Tibial artery (tissue), 4 donors: ENCODE measurements at regions of chr9 and their contacts with region 1.

Region 1: DNA sequence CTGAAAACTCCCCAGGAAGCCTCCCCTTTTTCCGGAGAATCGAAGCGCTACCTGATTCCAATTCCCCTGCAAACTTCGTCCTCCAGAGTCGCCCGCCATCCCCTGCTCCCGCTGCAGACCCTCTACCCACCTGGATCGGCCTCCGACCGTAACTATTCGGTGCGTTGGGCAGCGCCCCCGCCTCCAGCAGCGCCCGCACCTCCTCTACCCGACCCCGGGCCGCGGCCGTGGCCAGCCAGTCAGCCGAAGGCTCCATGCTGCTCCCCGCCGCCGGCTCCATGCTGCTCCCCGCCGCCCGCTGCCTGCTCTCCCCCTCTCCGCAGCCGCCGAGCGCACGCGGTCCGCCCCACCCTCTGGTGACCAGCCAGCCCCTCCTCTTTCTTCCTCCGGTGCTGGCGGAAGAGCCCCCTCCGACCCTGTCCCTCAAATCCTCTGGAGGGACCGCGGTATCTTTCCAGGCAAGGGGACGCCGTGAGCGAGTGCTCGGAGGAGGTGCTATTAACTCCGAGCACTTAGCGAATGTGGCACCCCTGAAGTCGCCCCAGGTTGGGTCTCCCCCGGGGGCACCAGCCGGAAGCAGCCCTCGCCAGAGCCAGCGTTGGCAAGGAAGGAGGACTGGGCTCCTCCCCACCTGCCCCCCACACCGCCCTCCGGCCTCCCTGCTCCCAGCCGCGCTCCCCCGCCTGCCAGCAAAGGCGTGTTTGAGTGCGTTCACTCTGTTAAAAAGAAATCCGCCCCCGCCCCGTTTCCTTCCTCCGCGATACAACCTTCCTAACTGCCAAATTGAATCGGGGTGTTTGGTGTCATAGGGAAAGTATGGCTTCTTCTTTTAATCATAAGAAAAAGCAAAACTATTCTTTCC is 19.4 kb downstream of the CDKN2A start:
- DNase-seq: no peak
- H3K4me3 ChIP-seq: peak overlapping the region; percentile 35 to 49
- H3K27ac ChIP-seq: no peak overlapping the region
- H3K4me1 ChIP-seq: peaks cover 0 to 18% (median 13%) of the 10 kb centered on the region in 4 donors
- H3K27me3 ChIP-seq: peaks cover 4 to 98% of the 10 kb centered on the region in 2 donors
- CTCF ChIP-seq: no peak

Region 2: GRCh38 chr9:22097697-22098096 is 122.9 kb after region 1 on chr9:
- intact Hi-C with region 1: loop called (anchors 5 kb)
- DNase-seq: no peak
- H3K4me3 ChIP-seq: no peak overlapping the region
- H3K27ac ChIP-seq: no peak overlapping the region
- H3K4me1 ChIP-seq: peaks cover 0 to 1% (median 0%) of the 10 kb centered on the region in 4 donors
- H3K27me3 ChIP-seq: no peaks in the 10 kb centered on the region
- CTCF ChIP-seq: no peak